RWPE1 (cell line): ENCODE measurements at regions of chr5 and their contacts with region 1.

Region 1: DNA sequence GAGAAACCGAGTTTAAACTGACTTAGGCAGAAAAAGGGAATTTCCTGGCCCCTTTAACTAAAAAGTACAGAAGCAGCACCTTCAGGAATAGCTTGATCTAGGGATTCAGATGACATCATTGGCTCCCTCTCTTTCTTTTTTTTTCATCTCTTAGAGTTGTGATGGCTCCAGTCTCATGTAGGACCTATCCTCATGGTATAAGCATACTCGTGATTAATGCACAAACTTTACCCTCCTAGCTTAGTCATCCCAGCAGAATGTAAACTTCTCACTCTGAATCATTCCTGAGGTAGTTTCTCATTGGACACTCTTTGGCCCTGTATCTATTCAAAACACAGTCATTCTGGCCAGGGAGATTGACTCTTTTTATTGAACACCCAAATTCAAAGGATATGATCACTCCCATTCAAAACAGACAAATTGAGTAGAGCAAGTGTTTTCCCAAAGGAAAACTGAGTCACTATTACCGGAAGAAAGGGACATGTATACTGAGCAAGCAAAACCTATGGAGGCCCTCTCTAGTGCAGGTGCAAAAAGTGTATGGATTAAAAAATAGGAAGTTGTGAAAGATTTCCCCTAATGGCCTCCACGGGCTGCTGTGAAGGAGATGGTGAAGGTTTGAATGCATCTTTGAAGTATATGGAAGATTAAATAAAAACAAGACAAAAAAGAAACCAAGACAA is 27.6 kb upstream of the SMIM23 start:
- DNase-seq: peak; percentile 95
- H3K27ac ChIP-seq: no peak overlapping the region
- CTCF ChIP-seq: no peak

Region 2: DNA sequence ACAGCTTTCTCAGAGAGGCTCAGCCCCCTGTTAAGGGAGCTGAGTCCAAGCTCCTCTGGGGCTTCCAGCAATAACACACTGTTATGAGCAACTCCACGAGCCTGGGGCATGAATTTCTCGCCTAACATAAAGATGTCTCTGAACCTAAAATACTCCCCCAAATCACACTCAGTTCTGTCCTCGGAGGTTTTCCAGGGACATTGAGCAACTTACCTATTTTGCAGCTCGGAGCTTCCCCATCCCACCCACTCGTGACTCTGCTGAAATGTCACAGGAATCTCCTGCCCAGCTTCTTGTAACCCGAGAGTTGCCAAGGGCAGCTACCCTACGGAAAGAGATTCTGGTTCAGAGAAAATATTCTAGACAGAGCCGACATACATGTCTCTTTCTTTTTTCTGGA is 19.5 kb before region 1 on chr5:
- CTCF ChIA-PET with region 1: interaction called, 11 read pairs
- POLR2A ChIA-PET with region 1: no interaction called
- DNase-seq: no peak
- H3K27ac ChIP-seq: no peak overlapping the region
- CTCF ChIP-seq: no peak